Activated T-helper 2 cell treated with anti-CD3 and anti-CD28 coated beads, Interferon-gamma antibody, Interleukin-2, Interleukin-4, amounts not matched to agents 10 μg/mL and 5 μg/mL and 100 μg/mL, durations not matched to agents 14 hours and 24 hours and 36 hours (primary cell): ENCODE measurements at regions of chr3 and their contacts with region 1.

Region 1: GRCh38 chr3:168086541-168087270 is 9.0 kb downstream of the GOLIM4 start:
- DNase-seq: no peak
- H3K4me3 Mint-ChIP-seq: no peak overlapping the region
- H3K27ac Mint-ChIP-seq: no peak overlapping the region
- H3K4me1 Mint-ChIP-seq: peaks cover 38% of the 10 kb centered on the region
- H3K27me3 Mint-ChIP-seq: peaks cover 9% of the 10 kb centered on the region

Region 2: GRCh38 chr3:168061332-168061996 is 25.2 kb before region 1 on chr3:
- intact Hi-C with region 1: loop called (anchors 1 kb)
- DNase-seq: no peak
- H3K4me3 Mint-ChIP-seq: peak overlapping the region; percentile 55
- H3K27ac Mint-ChIP-seq: peak overlapping the region; percentile 65
- H3K4me1 Mint-ChIP-seq: peaks cover 26% of the 10 kb centered on the region
- H3K27me3 Mint-ChIP-seq: peaks cover 1% of the 10 kb centered on the region

Region 3: GRCh38 chr3:168782193-168782592 is 695.5 kb after region 1 on chr3:
- intact Hi-C with region 1: no loop called
- DNase-seq: no peak
- H3K4me3 Mint-ChIP-seq: no peak overlapping the region
- H3K27ac Mint-ChIP-seq: no peak overlapping the region
- H3K4me1 Mint-ChIP-seq: no peaks in the 10 kb centered on the region
- H3K27me3 Mint-ChIP-seq: no peaks in the 10 kb centered on the region